Endothelial cell of umbilical vein (primary cell): ENCODE measurements at regions of chr4 and their contacts with region 1.

Region 1: GRCh38 chr4:17468371-17469221 is 43.3 kb downstream of the QDPR start:
- DNase-seq: peak; percentile 58
- H3K4me3 ChIP-seq: no peak overlapping the region
- H3K27ac ChIP-seq: no peak overlapping the region
- H3K4me1 ChIP-seq: no peaks in the 10 kb centered on the region
- H3K27me3 ChIP-seq: no peaks in the 10 kb centered on the region
- CTCF ChIP-seq: peak; percentile 28 to 52
- POLR2A ChIP-seq: no peak

Region 2: DNA sequence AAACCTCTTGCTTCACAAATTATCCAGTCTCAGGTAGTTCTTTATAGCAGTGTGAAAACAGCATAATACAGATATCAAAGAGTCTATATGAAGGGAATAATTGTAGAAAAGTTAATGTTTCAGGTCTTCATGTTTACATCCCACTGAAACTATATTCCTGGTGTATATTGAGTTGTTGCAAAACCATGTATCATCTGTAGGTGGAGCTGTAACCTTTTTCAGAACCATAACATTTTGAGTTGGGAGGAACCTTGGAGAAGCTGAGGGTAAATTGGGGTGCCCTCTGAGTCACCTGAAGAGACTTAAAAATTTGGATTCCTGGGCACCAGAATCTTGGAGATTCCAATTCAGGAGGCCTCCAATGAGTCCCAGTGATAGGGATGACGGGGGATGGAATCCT is 1190.4 kb before region 1 on chr4:
- CTCF ChIA-PET with region 1: interaction called, 15 read pairs
- POLR2A ChIA-PET with region 1: no interaction called
- dilution Hi-C with region 1: no loop called
- intact Hi-C with region 1: no loop called
- DNase-seq: no peak
- H3K4me3 ChIP-seq: no peak overlapping the region
- H3K27ac ChIP-seq: no peak overlapping the region
- H3K4me1 ChIP-seq: no peaks in the 10 kb centered on the region
- H3K27me3 ChIP-seq: peaks cover 2 to 5% of the 10 kb centered on the region in 2 experiments
- CTCF ChIP-seq: peak; percentile 23 to 28
- POLR2A ChIP-seq: no peak

Region 3: DNA sequence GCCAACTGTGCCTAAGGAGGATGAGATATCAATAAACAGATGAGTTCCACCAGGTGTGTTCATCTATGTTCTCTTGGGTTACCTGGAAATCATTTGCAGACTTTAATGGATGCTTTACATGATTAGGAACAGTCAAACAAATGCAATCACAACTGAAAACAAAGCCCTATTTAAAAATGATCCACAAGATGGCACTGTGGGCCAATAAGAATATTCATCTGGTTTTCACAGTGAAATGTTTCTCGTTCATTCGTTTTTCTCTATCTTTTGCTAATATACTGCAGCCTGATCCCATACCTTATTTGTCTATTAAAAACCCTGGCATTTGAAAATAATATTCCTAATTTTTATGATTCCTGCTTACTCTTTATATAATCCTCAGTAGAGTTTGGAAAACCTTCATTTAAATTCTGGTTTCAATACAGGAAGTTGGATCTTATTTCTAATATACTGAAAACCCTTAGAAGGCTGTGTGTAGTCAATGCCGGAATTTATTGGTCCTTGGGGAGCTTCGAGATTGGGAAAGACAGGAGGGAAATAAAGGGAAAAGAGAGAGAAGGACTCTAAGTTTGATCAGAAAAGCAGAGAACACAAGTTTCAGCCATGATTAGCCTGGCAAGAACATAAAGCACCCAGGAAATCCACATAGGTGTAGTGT is 1178.6 kb before region 1 on chr4:
- CTCF ChIA-PET with region 1: interaction called, 43 read pairs
- POLR2A ChIA-PET with region 1: no interaction called
- dilution Hi-C with region 1: no loop called
- intact Hi-C with region 1: loop called (anchors 1 kb)
- DNase-seq: peak; percentile 69
- H3K4me3 ChIP-seq: no peak overlapping the region
- H3K27ac ChIP-seq: no peak overlapping the region
- H3K4me1 ChIP-seq: no peaks in the 10 kb centered on the region
- H3K27me3 ChIP-seq: peaks cover 12 to 18% of the 10 kb centered on the region in 2 experiments
- CTCF ChIP-seq: peak; percentile 27 to 41
- POLR2A ChIP-seq: no peak

Region 4: DNA sequence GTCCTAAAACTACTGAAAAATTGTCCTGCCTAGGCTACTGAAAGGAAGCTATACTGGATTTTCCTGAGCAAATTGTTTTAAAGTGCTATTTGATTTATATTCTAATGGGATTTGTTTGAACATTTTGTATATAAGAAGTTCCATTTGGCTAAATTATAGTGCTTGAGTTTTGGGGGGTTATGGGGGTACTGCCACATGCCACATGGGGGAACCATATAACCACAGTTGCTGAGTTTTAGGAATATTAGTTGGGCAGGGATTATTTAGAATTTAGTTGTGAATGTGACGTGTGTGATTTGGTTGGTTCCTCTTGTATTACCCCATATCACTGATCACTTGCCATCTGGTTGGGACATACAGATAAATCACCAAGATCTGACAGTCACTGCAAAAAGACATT is 1017.9 kb before region 1 on chr4:
- CTCF ChIA-PET with region 1: interaction called, 5 read pairs
- POLR2A ChIA-PET with region 1: no interaction called
- dilution Hi-C with region 1: no loop called
- intact Hi-C with region 1: loop called (anchors 5 kb)
- DNase-seq: peak; percentile 13
- H3K4me3 ChIP-seq: no peak overlapping the region
- H3K27ac ChIP-seq: no peak overlapping the region
- H3K4me1 ChIP-seq: no peaks in the 10 kb centered on the region
- H3K27me3 ChIP-seq: peaks cover 0 to 7% of the 10 kb centered on the region in 2 experiments
- CTCF ChIP-seq: peak; percentile 18 to 19
- POLR2A ChIP-seq: no peak

Region 5: DNA sequence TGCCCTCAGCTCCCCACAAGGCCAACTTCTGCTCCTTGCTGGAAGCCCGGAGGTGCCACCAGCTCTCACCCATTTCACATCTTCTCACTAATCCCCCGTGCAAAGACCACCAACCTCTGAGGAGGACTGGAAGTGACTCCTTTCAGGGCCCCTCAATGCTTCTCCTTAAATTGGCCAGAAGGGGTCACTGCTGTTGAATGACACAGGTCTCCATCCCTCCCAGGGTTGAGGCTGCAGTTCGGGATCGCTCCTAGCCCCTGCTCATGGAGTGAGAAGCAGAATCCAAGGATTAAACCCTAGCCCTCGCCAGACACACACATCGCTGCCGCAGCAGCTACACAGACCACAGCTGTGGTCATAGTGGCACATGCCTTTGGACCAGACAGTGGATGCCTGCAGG is 962.9 kb before region 1 on chr4:
- CTCF ChIA-PET with region 1: interaction called, 4 read pairs
- POLR2A ChIA-PET with region 1: no interaction called
- dilution Hi-C with region 1: no loop called
- intact Hi-C with region 1: loop called (anchors 10 kb)
- DNase-seq: no peak
- H3K4me3 ChIP-seq: no peak overlapping the region
- H3K27ac ChIP-seq: no peak overlapping the region
- H3K4me1 ChIP-seq: no peaks in the 10 kb centered on the region
- H3K27me3 ChIP-seq: no peaks in the 10 kb centered on the region
- CTCF ChIP-seq: peak; percentile 16 to 39
- POLR2A ChIP-seq: no peak

Region 6: DNA sequence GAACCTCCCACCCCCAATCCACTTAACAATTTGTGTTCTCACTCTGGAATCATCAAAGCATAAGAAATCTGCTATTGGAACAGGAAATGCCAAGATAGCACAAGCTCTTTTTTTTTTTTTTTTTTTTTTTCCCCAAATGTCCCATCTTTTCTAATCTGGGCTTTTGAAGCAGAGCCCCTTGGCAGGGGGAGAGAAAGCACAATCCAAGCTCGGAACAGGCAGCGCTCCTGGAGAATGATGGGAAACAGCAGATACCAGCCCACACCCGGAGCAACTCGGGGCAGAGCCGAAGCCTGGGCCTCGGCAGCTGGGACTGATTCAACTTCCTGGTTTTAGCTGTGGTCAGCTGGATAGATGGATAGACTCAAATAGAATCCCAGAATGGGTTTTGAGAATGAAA is 191.8 kb before region 1 on chr4:
- CTCF ChIA-PET with region 1: no interaction called
- POLR2A ChIA-PET with region 1: no interaction called
- dilution Hi-C with region 1: no loop called
- intact Hi-C with region 1: no loop called
- DNase-seq: peak; percentile 30
- H3K4me3 ChIP-seq: no peak overlapping the region
- H3K27ac ChIP-seq: no peak overlapping the region
- H3K4me1 ChIP-seq: no peaks in the 10 kb centered on the region
- H3K27me3 ChIP-seq: no peaks in the 10 kb centered on the region
- CTCF ChIP-seq: no peak
- POLR2A ChIP-seq: no peak

Region 7: GRCh38 chr4:17347445-17347844 is 121.2 kb before region 1 on chr4:
- CTCF ChIA-PET with region 1: interaction called, 90 read pairs
- POLR2A ChIA-PET with region 1: no interaction called
- dilution Hi-C with region 1: no loop called
- intact Hi-C with region 1: loop called (anchors 1 kb)
- DNase-seq: peak; percentile 40
- H3K4me3 ChIP-seq: no peak overlapping the region
- H3K27ac ChIP-seq: no peak overlapping the region
- H3K4me1 ChIP-seq: no peaks in the 10 kb centered on the region
- H3K27me3 ChIP-seq: no peaks in the 10 kb centered on the region
- CTCF ChIP-seq: peak; percentile 44 to 57
- POLR2A ChIP-seq: no peak

Region 8: GRCh38 chr4:17426222-17426621 is 42.4 kb before region 1 on chr4:
- CTCF ChIA-PET with region 1: no interaction called
- POLR2A ChIA-PET with region 1: no interaction called
- dilution Hi-C with region 1: no loop called
- intact Hi-C with region 1: no loop called
- DNase-seq: no peak
- H3K4me3 ChIP-seq: no peak overlapping the region
- H3K27ac ChIP-seq: no peak overlapping the region
- H3K4me1 ChIP-seq: no peaks in the 10 kb centered on the region
- H3K27me3 ChIP-seq: no peaks in the 10 kb centered on the region
- CTCF ChIP-seq: no peak
- POLR2A ChIP-seq: no peak